Caco-2 (cell line): ENCODE measurements at regions of chr12 and their contacts with region 1.

Region 1: GRCh38 chr12:111193496-111193895 is 175.4 kb downstream of the PHETA1 start:
- DNase-seq: no peak
- H3K4me3 ChIP-seq: no peak overlapping the region
- H3K4me3 Mint-ChIP-seq: no peak overlapping the region
- H3K27ac Mint-ChIP-seq: no peak overlapping the region
- H3K4me1 ChIP-seq: no peaks in the 10 kb centered on the region
- H3K4me1 Mint-ChIP-seq: no peaks in the 10 kb centered on the region
- H3K27me3 ChIP-seq: no peaks in the 10 kb centered on the region
- H3K27me3 Mint-ChIP-seq: peaks cover 13% of the 10 kb centered on the region
- CTCF ChIP-seq: no peak

Region 2: GRCh38 chr12:111224186-111225066 is 30.9 kb after region 1 on chr12:
- CTCF ChIA-PET with region 1: no interaction called
- POLR2A ChIA-PET with region 1: interaction called, 18 read pairs
- intact Hi-C with region 1: no loop called
- DNase-seq: no peak
- H3K4me3 ChIP-seq: no peak overlapping the region
- H3K4me3 Mint-ChIP-seq: no peak overlapping the region
- H3K27ac Mint-ChIP-seq: no peak overlapping the region
- H3K4me1 ChIP-seq: no peaks in the 10 kb centered on the region
- H3K4me1 Mint-ChIP-seq: no peaks in the 10 kb centered on the region
- H3K27me3 ChIP-seq: no peaks in the 10 kb centered on the region
- H3K27me3 Mint-ChIP-seq: peaks cover 5% of the 10 kb centered on the region
- CTCF ChIP-seq: no peak

Region 3: GRCh38 chr12:111248236-111249017 is 54.9 kb after region 1 on chr12:
- CTCF ChIA-PET with region 1: no interaction called
- POLR2A ChIA-PET with region 1: no interaction called
- intact Hi-C with region 1: no loop called
- DNase-seq: no peak
- H3K4me3 ChIP-seq: no peak overlapping the region
- H3K4me3 Mint-ChIP-seq: no peak overlapping the region
- H3K27ac Mint-ChIP-seq: no peak overlapping the region
- H3K4me1 ChIP-seq: no peaks in the 10 kb centered on the region
- H3K4me1 Mint-ChIP-seq: no peaks in the 10 kb centered on the region
- H3K27me3 ChIP-seq: no peaks in the 10 kb centered on the region
- H3K27me3 Mint-ChIP-seq: peaks cover 15% of the 10 kb centered on the region
- CTCF ChIP-seq: no peak